Activated CD8-positive, alpha-beta T cell treated with anti-CD3 and anti-CD28 coated beads, Interleukin-2, amount 10 ng/mL, durations not matched to agents 7 days and 5 days (primary cell): ENCODE measurements at regions of chr13 and their contacts with region 1.

Region 1: GRCh38 chr13:31150315-31150985 is 11.3 kb downstream of the HSPH1 start:
- DNase-seq: no peak
- ATAC-seq: peak; percentile 12
- H3K4me3 Mint-ChIP-seq: no peak overlapping the region
- H3K27ac Mint-ChIP-seq: no peak overlapping the region
- H3K4me1 Mint-ChIP-seq: peaks cover 10% of the 10 kb centered on the region
- H3K27me3 Mint-ChIP-seq: no peaks in the 10 kb centered on the region

Region 2: DNA sequence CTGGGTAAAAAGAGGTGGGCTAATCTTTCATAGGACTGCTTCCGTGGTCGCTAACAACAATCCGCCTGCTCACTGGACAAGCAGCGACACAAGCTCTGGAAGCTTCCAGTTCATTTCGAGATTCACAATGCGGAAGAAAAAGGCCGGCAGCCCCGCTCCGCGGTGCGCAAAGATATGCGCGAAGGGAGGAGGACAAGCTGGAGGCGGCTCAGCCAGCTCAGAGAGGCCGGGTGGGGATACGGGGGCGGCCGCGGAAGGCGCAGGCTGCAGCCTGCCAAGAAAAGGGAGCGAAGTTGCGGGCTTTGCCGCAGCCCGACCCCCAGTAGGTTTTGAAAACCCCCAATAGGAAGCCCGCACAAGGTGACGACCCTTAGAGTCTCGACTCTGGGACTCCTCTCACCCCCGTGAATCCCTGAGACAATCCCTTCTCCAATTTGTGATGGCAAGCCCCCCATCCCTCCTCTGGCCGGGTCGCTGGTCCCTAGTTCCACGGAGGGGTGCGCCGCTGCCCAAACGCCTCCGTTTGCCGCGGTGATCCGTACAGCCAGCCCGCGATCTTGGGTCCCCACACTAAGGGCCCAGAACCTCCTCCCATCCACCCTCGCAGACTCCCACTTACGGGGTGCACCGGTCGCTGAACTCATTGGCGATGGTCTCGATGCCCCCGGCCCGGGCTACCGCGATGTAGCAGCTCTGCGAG is 10.6 kb after region 1 on chr13:
- CTCF ChIA-PET with region 1: interaction called, 10 read pairs
- POLR2A ChIA-PET with region 1: interaction called, 4 read pairs
- DNase-seq: peak; percentile 77
- ATAC-seq: peak; percentile 12
- H3K4me3 Mint-ChIP-seq: peak overlapping the region; percentile 98
- H3K27ac Mint-ChIP-seq: peak overlapping the region; percentile 99
- H3K4me1 Mint-ChIP-seq: peaks cover 42% of the 10 kb centered on the region
- H3K27me3 Mint-ChIP-seq: no peaks in the 10 kb centered on the region